ENCODE measurements at regions of chr3 and their contacts with region 1.

Region 1: GRCh38 chr3:66822186-66823008 is 175.7 kb upstream of the KBTBD8 start:
- DNase-seq: peak; percentile 78
- H3K4me3 ChIP-seq: no peak overlapping the region
- H3K27ac ChIP-seq: no peak overlapping the region
- H3K4me1 ChIP-seq: no peaks in the 10 kb centered on the region
- H3K27me3 ChIP-seq: no peaks in the 10 kb centered on the region
- CTCF ChIP-seq: peak; percentile 34 to 78 (median 67)
- POLR2A ChIP-seq: no peak

Region 2: GRCh38 chr3:66253790-66254620 is 568.4 kb before region 1 on chr3:
- intact Hi-C with region 1: loop called (anchors 10 kb)
- DNase-seq: no peak
- H3K4me3 ChIP-seq: no peak overlapping the region
- H3K27ac ChIP-seq: no peak overlapping the region
- H3K4me1 ChIP-seq: no peaks in the 10 kb centered on the region
- H3K27me3 ChIP-seq: no peaks in the 10 kb centered on the region
- CTCF ChIP-seq: peak; percentile 36 to 83 (median 43)
- POLR2A ChIP-seq: no peak

Measured in testis (tissue), 5 donors.